Endothelial cell of umbilical vein (primary cell): ENCODE measurements at regions of chrX and their contacts with region 1.

Region 1: DNA sequence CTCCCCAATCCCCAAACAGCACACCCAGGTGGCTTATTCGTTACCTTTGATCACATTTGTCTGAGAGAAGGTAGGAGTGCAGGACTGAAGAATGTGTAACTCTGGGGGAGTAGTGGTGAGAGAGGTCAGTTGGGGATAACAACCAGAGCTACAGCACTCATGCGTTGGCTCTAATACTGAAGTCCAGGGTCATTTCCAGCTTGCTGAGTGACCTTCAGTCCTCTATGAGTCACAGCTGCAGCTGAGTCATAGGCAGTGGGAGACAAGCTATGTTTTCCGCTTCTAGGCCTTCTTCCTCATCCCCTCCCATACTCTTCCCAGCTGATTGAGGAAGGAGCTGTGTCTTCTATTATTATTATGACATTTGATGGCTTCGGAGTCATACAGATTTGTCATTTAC is 31.6 kb upstream of the CT47C1 start:
- DNase-seq: peak; percentile 90
- H3K4me3 ChIP-seq: no peak overlapping the region
- H3K27ac ChIP-seq: peak overlapping the region; percentile 43
- H3K4me1 ChIP-seq: peaks cover 20% of the 10 kb centered on the region
- H3K27me3 ChIP-seq: no peaks in the 10 kb centered on the region
- CTCF ChIP-seq: no peak
- POLR2A ChIP-seq: no peak

Region 2: GRCh38 chrX:118974088-118974907 is 66.9 kb before region 1 on chrX and contains the start of gene LONRF3:
- CTCF ChIA-PET with region 1: no interaction called
- POLR2A ChIA-PET with region 1: no interaction called
- dilution Hi-C with region 1: no loop called
- intact Hi-C with region 1: no loop called
- DNase-seq: peak; percentile 58
- H3K4me3 ChIP-seq: peak within 1 kb of the TSS; percentile 68 to 91 (median 72)
- H3K27ac ChIP-seq: no peak within 1 kb of the TSS
- H3K4me1 ChIP-seq: peaks cover 17% of the 10 kb centered on the region
- H3K27me3 ChIP-seq: peaks cover 17 to 22% of the 10 kb centered on the region in 2 experiments
- CTCF ChIP-seq: no peak
- POLR2A ChIP-seq: no peak
- total RNA-seq, gene LONRF3: 7.9 and 13.3 TPM in 2 replicates

Region 3: GRCh38 chrX:119015407-119016237 is 25.6 kb before region 1 on chrX:
- CTCF ChIA-PET with region 1: interaction called, 3 read pairs
- POLR2A ChIA-PET with region 1: interaction called, 4 read pairs
- dilution Hi-C with region 1: no loop called
- intact Hi-C with region 1: loop called (anchors 2 kb)
- DNase-seq: peak; percentile 90
- H3K4me3 ChIP-seq: no peak overlapping the region
- H3K27ac ChIP-seq: peak overlapping the region; percentile 92
- H3K4me1 ChIP-seq: peaks cover 18% of the 10 kb centered on the region
- H3K27me3 ChIP-seq: no peaks in the 10 kb centered on the region
- CTCF ChIP-seq: no peak
- POLR2A ChIP-seq: no peak